Activated T-helper 1 cell treated with anti-CD3 and anti-CD28 coated beads, Interleukin-12 subunit alpha, Interleukin-12 subunit beta, Interleukin-2, Interleukin-4 antibody, amounts not matched to agents 30 ng/mL and 10 ng/mL and 1 ng/mL, durations not matched to agents 14 hours and 24 hours and 36 hours (primary cell): ENCODE measurements at regions of chr1 and their contacts with region 1.

Region 1: DNA sequence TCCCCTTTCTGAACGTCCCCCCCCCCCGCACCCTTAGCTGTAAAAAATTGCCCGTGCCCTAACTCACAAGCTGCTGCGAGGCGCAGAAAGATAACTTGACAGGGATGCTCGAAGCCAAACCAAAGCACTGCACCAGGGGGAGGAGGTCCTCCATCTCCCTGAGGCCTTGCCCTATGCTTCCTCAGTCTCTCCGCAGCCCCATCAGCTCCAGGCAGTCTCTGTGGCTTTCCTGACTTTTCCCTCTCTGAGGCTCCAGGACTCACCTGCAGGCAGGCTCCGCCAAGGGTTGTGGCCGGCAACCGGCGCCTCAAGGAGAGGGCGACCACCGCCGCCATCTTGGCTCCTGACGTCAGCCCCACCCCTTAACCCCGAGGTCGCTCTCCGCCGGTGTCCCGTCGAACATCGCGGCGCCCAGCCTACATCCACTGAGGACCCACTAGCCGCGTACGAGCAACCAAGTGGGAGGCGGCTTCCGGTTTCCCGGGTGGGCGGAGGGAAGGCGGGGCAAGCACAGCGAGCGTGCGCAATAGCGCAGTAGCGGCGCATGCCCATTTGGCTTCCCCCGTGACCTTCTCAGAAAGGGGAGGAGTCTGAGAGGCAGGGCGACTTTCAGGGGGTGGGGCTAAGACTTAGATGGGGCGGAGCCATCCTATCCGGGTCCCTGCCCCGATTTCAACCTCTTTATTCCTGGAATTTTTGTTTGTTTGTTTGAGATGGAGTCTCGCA is at the start of gene SDHB:
- DNase-seq: peak; percentile 99
- H3K4me3 Mint-ChIP-seq: peak within 1 kb of the TSS; percentile 99
- H3K27ac Mint-ChIP-seq: peak within 1 kb of the TSS; percentile 95
- H3K4me1 Mint-ChIP-seq: peaks cover 18% of the 10 kb centered on the region
- H3K27me3 Mint-ChIP-seq: peaks cover 2% of the 10 kb centered on the region
- total RNA-seq, gene SDHB: 131 and 137 TPM in 2 replicates

Region 2: GRCh38 chr1:15417365-15417934 is 1636.4 kb before region 1 on chr1:
- intact Hi-C with region 1: loop called (anchors 5 kb)
- DNase-seq: peak; percentile 64
- H3K4me3 Mint-ChIP-seq: peak overlapping the region; percentile 62
- H3K27ac Mint-ChIP-seq: peak overlapping the region; percentile 84
- H3K4me1 Mint-ChIP-seq: peaks cover 65% of the 10 kb centered on the region
- H3K27me3 Mint-ChIP-seq: no peaks in the 10 kb centered on the region

Region 3: DNA sequence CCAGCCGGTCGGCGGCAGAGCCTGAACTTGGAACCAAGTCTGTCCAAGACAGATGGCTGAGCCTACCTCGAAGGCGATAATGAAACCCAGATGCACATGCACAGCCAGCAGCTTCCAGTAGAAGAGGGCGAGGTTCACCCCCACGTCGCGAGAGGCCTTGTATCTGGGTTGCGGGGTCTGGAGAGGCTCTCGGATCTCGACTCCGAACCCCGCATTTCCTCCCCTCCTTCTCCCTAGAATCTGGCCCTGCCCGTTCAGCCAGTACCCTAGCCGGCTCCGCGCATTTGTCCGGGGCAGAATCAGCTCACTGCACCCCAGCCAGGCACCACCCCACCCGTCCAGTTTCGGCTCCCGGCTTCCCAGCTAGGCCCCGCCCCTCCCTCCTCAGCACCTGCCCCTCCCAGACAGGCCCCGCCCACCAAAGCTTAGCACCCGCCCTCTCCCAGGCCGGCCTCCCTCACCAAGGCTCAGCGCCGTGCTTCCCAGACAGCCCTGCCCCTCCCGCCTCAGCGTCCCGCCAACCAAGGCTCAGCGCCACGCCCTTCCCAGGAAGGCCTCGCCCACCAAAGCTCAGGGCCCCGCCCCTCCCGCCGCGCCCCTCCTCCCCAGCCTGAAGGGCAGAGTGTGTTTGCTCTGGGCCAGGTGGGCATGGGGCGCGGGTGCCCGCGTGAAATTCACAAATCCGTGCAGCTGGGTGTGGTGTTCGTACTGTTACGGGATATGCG is 836.6 kb before region 1 on chr1:
- intact Hi-C with region 1: loop called (anchors 5 kb)
- DNase-seq: peak; percentile 92
- H3K4me3 Mint-ChIP-seq: peak overlapping the region; percentile 83
- H3K27ac Mint-ChIP-seq: no peak overlapping the region
- H3K4me1 Mint-ChIP-seq: peaks cover 22% of the 10 kb centered on the region
- H3K27me3 Mint-ChIP-seq: peaks cover 4% of the 10 kb centered on the region

Region 4: DNA sequence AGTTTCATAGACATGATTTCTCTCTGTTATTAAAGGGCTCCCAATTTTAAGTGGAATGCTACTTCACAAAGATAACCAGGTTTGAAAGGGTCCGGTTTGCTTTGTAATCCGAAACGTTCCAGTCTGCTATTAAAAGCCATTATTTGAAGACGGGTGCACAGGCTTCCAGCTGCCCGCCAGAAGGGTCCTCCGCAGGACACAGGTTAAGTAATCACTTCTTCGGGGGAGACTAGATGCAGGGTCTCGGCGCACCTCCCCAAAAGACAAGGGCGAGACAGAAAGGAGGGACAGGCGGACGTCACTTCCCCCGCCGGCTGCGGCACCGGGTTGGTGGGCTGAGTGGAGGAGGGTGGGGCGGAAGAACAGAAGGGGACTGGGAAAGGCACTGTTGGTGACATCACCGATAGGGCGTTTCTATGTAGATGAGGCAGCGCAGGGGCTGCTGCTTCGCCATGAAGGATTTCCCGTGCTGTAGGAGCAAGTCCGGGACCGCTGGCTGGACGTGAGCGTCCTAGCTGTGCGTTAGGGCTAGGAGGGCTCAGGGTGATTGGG is 149.2 kb before region 1 on chr1:
- intact Hi-C with region 1: loop called (anchors 2 kb)
- DNase-seq: peak; percentile 99
- H3K4me3 Mint-ChIP-seq: no peak overlapping the region
- H3K27ac Mint-ChIP-seq: no peak overlapping the region
- H3K4me1 Mint-ChIP-seq: peaks cover 19% of the 10 kb centered on the region
- H3K27me3 Mint-ChIP-seq: no peaks in the 10 kb centered on the region

Region 5: DNA sequence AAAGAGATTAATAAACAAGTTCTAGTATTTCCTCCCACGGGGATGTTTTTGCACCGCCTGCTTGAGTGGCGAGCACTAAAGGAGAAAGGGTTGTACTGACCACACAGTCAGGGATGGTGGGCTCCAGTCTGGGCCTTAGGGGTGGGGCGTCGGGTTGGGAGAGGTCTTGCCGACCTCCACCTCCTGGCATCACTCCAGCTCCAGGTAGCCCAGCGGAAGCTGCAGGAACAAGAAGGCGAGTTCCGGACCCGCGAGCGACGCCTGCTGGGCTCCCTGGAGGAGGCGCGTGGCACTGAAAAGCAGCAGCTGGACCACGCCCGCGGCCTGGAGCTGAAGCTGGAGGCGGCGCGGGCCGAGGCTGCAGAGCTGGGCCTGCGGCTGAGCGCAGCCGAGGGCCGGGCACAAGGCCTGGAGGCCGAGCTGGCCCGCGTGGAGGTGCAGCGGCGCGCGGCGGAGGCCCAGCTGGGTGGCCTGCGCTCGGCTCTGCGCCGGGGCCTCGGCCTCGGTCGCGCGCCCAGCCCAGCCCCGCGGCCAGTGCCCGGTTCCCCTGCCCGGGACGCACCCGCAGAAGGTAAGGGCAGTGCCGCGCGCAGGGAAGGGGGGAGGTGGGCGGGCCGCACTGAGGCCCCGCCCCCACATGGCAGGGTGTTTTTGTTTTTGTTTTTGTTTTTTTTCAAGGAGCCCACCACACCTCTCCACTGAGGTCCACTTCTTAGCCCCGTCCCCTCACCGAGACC is 93.1 kb before region 1 on chr1:
- intact Hi-C with region 1: loop called (anchors 2 kb)
- DNase-seq: peak; percentile 75
- H3K4me3 Mint-ChIP-seq: peak overlapping the region; percentile 71
- H3K27ac Mint-ChIP-seq: peak overlapping the region; percentile 72
- H3K4me1 Mint-ChIP-seq: peaks cover 6% of the 10 kb centered on the region
- H3K27me3 Mint-ChIP-seq: no peaks in the 10 kb centered on the region

Region 6: DNA sequence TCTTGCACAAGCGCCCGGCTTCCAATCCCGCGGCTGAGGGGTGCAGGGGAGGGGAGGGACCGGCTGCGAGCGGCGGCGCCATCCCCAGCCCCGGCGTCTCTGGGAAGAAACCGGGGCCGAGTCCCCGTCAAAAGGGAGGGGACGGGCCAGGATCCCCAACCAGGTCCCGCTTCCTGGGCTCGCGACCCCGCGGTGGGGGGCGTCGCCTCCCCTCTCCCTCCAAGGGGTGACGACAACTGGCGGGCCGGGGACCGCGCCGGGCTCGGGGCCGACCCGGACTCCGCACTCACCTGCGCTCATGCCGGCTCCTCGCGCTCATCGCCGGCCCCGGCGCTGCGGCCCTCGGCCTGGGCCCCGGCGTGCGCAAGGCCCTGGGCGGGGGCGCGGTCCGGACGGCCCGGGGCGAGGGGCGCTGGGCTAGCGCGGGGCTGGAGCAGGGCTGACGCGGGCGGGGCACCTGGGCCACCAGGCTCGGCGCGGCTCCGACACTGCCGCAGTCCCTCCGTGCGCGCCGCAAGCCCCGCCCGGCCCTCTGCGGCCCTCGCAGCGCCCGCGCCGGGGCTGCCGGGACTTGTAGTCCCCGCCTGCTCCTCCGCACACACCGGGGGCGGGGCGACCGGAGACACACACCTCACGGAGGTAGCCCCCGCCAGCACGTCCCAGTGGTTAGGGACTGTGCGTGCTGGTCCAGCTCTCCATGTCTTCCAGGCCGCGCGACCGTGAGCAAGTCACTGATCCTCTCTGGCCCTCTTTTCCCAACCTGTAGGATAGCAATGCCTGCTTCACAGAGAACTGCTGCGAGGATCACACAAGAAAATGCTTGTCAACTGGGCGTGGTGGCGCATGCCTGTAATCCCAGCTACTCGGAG is 42.2 kb before region 1 on chr1 and contains the start of gene ATP13A2:
- intact Hi-C with region 1: loop called (anchors 1 kb)
- DNase-seq: peak; percentile 82
- H3K4me3 Mint-ChIP-seq: peak within 1 kb of the TSS; percentile 86
- H3K27ac Mint-ChIP-seq: peak within 1 kb of the TSS; percentile 73
- H3K4me1 Mint-ChIP-seq: peaks cover 24% of the 10 kb centered on the region
- H3K27me3 Mint-ChIP-seq: peaks cover 4% of the 10 kb centered on the region
- total RNA-seq, gene ATP13A2: 48.3 and 56.4 TPM in 2 replicates

Region 7: DNA sequence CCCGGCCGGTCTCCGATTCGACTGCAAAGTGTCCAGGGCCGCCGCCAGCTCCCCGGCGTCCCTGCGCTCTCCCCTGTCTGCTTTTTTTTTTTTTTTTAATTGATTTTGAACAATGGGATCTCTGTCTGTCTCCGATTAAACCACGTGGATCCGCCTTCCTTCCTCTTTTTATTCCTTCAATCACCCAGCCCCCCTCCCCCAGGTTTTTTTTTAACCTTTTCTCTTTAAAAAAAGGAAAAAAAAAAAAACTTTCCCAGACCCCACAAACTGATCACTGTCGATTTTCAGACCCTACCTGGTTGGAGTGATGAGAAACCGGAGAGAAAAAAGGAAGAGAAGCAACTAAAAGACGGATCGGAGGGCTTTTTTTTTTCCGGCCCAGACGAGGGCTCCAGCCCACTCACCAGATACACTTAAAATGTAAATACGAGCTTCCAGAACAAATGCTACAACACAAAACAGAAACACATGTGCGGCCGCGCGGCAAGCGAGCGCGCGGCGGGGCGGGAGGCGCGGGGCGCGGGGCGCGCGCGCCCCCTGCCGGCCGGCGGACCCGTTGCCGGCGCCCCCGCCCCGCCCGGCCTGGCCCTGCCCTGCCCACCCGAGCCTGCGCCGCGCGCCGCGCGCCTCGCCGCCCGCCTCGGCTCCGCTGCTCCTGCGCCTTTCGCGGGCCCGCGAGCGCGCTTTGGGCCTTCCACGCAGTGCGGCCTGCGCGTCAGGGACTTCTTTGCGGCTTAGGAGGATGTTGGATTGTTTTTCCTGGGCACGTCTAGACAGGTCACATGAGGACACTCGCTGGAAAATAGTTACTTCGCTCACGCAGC is 385.6 kb after region 1 on chr1 and contains the start of gene RCC2:
- intact Hi-C with region 1: loop called (anchors 1 kb)
- DNase-seq: peak; percentile 66
- H3K4me3 Mint-ChIP-seq: peak within 1 kb of the TSS; percentile 94
- H3K27ac Mint-ChIP-seq: peak within 1 kb of the TSS; percentile 98
- H3K4me1 Mint-ChIP-seq: peaks cover 40% of the 10 kb centered on the region
- H3K27me3 Mint-ChIP-seq: no peaks in the 10 kb centered on the region
- total RNA-seq, gene RCC2: 238 and 246 TPM in 2 replicates

Region 8: GRCh38 chr1:17795836-17796645 is 742.2 kb after region 1 on chr1:
- intact Hi-C with region 1: no loop called
- DNase-seq: no peak
- H3K4me3 Mint-ChIP-seq: no peak overlapping the region
- H3K27ac Mint-ChIP-seq: no peak overlapping the region
- H3K4me1 Mint-ChIP-seq: no peaks in the 10 kb centered on the region
- H3K27me3 Mint-ChIP-seq: peaks cover 8% of the 10 kb centered on the region